Naive thymus-derived CD8-positive, alpha-beta T cell (primary cell): ENCODE measurements at regions of chr11 and their contacts with region 1.

Region 1: GRCh38 chr11:6481012-6481923 is at the starts of genes ARFIP2 and TIMM10B:
- DNase-seq: peak; percentile 87 to 98 (median 96)
- ATAC-seq: peak; percentile 95 to 96
- H3K4me3 Mint-ChIP-seq: peak within 1 kb of the TSS; percentile 93 to 99 (median 96)
- H3K27ac Mint-ChIP-seq: peak within 1 kb of the TSS; percentile 96 to 99 (median 99)
- H3K4me1 Mint-ChIP-seq: peaks cover 26 to 46% (median 43%) of the 10 kb centered on the region in 4 donors
- H3K27me3 Mint-ChIP-seq: no peaks in the 10 kb centered on the region
- polyA plus RNA-seq, gene ARFIP2: 31.1 to 43.8 (median 38.3) TPM
- polyA plus RNA-seq, gene TIMM10B: 30.5 to 42.7 (median 30.9) TPM

Region 2: DNA sequence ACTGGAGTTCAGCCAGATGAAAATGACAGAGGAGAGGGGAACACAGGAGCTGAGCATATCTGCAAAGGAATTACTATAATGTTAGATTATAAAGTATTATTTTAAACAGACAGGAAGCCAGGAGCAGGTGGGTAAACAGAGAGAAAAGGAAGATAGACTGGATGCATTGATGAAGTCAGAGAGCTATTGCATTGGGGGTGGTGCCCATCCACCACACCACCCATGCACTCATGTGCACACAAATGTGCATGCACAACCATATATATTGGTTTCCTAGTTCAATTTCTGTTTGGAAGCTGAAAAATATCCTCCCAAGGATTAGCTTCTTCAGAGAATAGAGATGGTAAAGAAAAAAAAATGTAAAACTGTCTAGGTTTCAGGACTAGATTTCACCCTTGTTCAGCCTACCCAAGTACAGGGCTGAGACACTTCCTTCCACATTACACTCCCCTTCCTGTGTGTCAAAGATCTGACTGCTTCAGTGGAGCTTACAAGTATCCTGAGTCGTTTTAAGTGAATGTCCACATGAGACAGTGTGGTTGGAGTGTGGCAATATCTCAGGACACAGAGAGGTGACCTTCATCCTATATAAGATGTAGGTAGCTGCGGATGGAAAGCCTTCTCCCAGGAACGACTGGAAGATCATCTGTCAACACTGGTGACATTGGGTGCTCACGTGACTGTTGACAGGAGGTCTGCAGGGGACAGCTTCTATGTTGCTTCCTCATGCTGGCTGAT is 103.2 kb before region 1 on chr11:
- POLR2A ChIA-PET with region 1: interaction called, 14 read pairs
- DNase-seq: peak in 3 of 10 donors; percentile 10 to 43 (median 42)
- ATAC-seq: peak; percentile 86 to 92
- H3K4me3 Mint-ChIP-seq: peak overlapping the region; percentile 53 to 84 (median 70)
- H3K27ac Mint-ChIP-seq: peak overlapping the region; percentile 46 to 96 (median 92)
- H3K4me1 Mint-ChIP-seq: peaks cover 21 to 37% (median 33%) of the 10 kb centered on the region in 4 donors
- H3K27me3 Mint-ChIP-seq: no peaks in the 10 kb centered on the region

Region 3: GRCh38 chr11:6389921-6390724 is 91.1 kb before region 1 on chr11 and contains the start of gene SMPD1:
- POLR2A ChIA-PET with region 1: interaction called, 15 read pairs
- DNase-seq: peak; percentile 90 to 97 (median 92)
- ATAC-seq: peak; percentile 83 to 85
- H3K4me3 Mint-ChIP-seq: peak within 1 kb of the TSS; percentile 91 to 97 (median 93)
- H3K27ac Mint-ChIP-seq: peak within 1 kb of the TSS; percentile 96 to 99 (median 98)
- H3K4me1 Mint-ChIP-seq: peaks cover 35 to 82% (median 67%) of the 10 kb centered on the region in 4 donors
- H3K27me3 Mint-ChIP-seq: no peaks in the 10 kb centered on the region
- polyA plus RNA-seq, gene SMPD1: 22.4 to 32.6 (median 31.7) TPM

Region 4: DNA sequence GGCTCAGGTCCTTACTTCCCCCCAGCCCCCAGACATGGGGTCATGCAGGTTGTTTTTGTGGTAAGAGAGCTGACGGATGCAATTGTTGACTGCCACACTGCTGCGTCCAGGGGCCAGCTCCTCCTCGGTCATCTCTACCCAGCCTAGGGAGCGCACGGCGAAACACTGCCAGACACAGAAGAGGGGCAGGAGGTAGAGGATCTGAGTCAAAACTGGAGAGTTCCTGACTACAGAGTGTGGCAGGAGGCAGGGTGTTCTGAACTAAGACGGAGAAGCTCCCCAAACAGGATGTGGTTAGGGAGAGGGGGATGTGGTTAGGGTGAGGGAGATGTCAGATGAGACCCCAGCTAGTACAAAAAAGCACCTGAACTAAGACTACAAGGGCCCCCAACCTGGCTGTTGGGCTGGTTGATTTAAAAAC is 78.7 kb before region 1 on chr11:
- POLR2A ChIA-PET with region 1: interaction called, 22 read pairs
- DNase-seq: peak; percentile 54 to 98 (median 89)
- ATAC-seq: peak; percentile 89 to 90
- H3K4me3 Mint-ChIP-seq: peak overlapping the region; percentile 74 to 97 (median 86)
- H3K27ac Mint-ChIP-seq: peak overlapping the region; percentile 89 to 99 (median 98)
- H3K4me1 Mint-ChIP-seq: peaks cover 68 to 100% (median 93%) of the 10 kb centered on the region in 4 donors
- H3K27me3 Mint-ChIP-seq: peaks cover 0 to 2% (median 0%) of the 10 kb centered on the region in 5 donors

Region 5: DNA sequence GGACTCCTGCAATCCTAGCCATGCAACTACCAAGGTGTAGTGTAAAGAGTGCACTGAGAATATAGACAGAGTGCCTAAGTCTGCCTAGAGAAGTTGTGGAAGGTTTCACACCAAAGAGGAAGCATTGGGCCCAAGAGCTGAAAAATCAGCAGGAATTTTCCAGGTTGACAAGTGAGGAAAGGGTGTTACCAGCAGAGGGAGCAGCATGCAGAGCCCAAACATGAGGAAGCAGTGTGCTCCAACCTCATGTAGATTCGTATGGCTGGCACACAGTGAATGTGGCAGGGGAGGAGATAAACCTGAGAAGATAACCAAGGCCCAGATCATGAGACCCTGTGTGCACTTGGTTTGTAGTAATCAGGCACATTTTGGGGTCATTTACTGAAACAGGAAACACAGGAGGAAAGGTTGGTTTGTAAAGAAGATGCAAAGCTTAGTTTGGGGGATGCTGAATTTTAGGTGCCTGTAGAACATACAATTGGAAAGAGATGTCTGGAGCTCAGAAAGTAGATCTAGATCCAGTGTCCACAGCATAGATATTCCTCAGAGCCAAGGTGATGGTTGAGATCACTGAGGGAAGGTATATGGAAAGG is 42.2 kb before region 1 on chr11:
- POLR2A ChIA-PET with region 1: no interaction called
- DNase-seq: peak in 6 of 10 donors; percentile 4 to 28 (median 24)
- ATAC-seq: peak; percentile 52 to 58
- H3K4me3 Mint-ChIP-seq: no peak overlapping the region
- H3K27ac Mint-ChIP-seq: no peak overlapping the region
- H3K4me1 Mint-ChIP-seq: peaks cover 2 to 9% (median 6%) of the 10 kb centered on the region in 4 donors
- H3K27me3 Mint-ChIP-seq: no peaks in the 10 kb centered on the region

Region 6: DNA sequence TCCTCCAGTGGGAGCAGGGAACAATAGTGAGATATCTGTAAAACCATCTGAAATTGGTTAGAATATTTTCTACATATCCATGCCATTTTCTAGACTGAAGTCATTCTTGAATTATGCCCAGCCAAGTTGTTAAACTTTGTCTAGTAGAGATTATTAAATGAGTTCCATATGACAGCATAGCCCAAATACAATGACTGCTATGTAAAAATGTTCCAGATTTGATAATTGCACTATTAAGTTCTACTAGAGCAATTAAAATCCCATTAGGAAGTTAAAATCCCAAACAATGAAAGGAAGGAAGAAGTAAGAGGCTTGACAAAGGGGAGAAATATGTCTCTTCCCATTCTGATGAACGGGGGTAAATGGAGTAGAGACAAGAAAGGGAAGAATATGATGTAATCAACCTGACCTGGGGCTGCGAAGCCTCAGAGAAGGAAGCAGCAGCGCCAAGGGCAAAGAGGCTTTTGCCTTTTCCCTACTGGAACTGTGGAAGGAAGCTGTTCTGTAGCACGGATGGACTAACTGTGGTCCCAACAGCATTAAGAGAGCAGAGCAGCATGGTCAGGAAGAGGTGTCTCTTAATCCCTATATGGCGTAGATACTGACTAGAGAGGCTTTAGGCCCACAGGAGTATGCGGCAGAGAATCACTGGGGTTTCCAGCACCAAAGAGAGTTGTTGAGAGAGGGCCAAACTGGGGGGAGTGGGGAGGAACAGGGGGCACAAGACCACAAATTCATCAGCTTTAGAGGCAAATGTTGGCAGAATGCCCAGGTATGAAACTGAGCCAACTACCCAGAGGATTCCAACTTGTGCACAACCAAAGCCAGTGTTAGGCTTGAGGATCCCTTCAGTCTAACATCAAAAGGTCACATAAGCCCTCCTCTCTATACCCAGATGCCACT is 95.5 kb after region 1 on chr11:
- POLR2A ChIA-PET with region 1: no interaction called
- DNase-seq: no peak
- ATAC-seq: no peak
- H3K4me3 Mint-ChIP-seq: no peak overlapping the region
- H3K27ac Mint-ChIP-seq: peak overlapping the region in 2 of 10 donors; percentile 3 to 17
- H3K4me1 Mint-ChIP-seq: peaks cover 0 to 13% (median 9%) of the 10 kb centered on the region in 4 donors
- H3K27me3 Mint-ChIP-seq: no peaks in the 10 kb centered on the region

Region 7: DNA sequence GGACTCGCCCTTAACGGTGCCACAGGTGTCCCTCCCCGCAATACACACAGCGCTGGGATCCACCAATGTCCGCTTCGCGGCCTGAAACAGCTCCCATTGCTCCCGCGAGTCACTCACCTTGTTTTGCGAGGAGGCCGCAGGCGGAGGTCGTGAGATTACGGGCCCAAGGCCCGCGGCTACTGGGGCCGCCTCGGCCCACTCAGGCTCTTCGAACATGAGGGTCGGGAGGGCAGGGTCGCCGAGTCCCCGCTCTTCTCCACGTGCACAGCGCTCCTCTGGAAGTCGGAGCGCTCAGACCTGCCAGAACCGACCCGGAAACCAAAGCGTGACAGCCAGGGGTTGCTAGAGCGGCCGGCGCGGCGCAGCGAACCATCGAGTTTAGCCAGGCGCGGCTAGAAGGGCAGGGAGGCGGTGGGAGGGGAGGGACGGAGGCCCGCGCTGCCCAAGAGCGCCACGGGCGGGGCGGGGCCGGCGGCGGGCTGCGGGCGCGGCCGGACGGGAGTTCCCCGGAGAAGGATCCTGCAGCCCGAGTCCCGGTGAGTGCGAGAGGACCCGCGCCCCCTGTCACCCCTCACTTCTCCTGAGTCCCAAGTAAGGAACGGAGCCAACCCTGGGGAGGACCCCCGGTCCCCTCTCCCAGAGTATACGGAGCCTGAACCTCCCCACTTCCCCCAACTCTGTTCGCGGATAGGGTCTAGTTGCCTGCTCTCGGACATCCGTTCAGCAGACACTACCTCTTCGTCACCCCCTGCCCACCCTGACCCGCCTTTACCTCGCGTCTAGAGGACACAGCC is 122.2 kb after region 1 on chr11 and contains the starts of genes ILK and RRP8:
- POLR2A ChIA-PET with region 1: interaction called, 15 read pairs
- DNase-seq: peak; percentile 68 to 92 (median 80)
- ATAC-seq: peak; percentile 80 to 85
- H3K4me3 Mint-ChIP-seq: no peak within 1 kb of the TSS
- H3K27ac Mint-ChIP-seq: no peak within 1 kb of the TSS
- H3K4me1 Mint-ChIP-seq: peaks cover 16 to 33% (median 29%) of the 10 kb centered on the region in 4 donors
- H3K27me3 Mint-ChIP-seq: no peaks in the 10 kb centered on the region
- polyA plus RNA-seq, gene ILK: 63.7 to 72.5 (median 68.5) TPM
- polyA plus RNA-seq, gene RRP8: 17.8 to 25.9 (median 20.9) TPM

Region 8: GRCh38 chr11:6682936-6683861 is 201.9 kb after region 1 on chr11 and contains the start of gene MRPL17:
- POLR2A ChIA-PET with region 1: interaction called, 15 read pairs
- DNase-seq: peak; percentile 92 to 100 (median 99)
- ATAC-seq: peak; percentile 96
- H3K4me3 Mint-ChIP-seq: peak within 1 kb of the TSS; percentile 96 to 100 (median 99)
- H3K27ac Mint-ChIP-seq: peak within 1 kb of the TSS; percentile 97 to 100 (median 99)
- H3K4me1 Mint-ChIP-seq: peaks cover 23 to 49% (median 37%) of the 10 kb centered on the region in 4 donors
- H3K27me3 Mint-ChIP-seq: peaks cover 0 to 2% (median 0%) of the 10 kb centered on the region in 5 donors
- polyA plus RNA-seq, gene MRPL17: 16.2 to 23.6 (median 16.5) TPM